ENCODE measurements at regions of chrX and their contacts with region 1.

Region 1: GRCh38 chrX:34058005-34058404 is 74.1 kb downstream of the FAM47A start:
- DNase-seq: no peak
- ATAC-seq: no peak
- H3K4me3 ChIP-seq: no peak overlapping the region
- H3K27ac ChIP-seq: no peak overlapping the region
- H3K4me1 ChIP-seq: no peaks in the 10 kb centered on the region
- H3K27me3 ChIP-seq: no peaks in the 10 kb centered on the region
- CTCF ChIP-seq: no peak
- POLR2A ChIP-seq: no peak
- RAD21 ChIP-seq: no peak

Region 2: GRCh38 chrX:34072906-34073305 is 14.9 kb after region 1 on chrX:
- CTCF ChIA-PET with region 1: no interaction called
- POLR2A ChIA-PET with region 1: interaction called, 12 read pairs
- dilution Hi-C with region 1: no loop called
- in situ Hi-C with region 1: no loop called
- intact Hi-C with region 1: no loop called
- DNase-seq: no peak
- ATAC-seq: no peak
- H3K4me3 ChIP-seq: no peak overlapping the region
- H3K27ac ChIP-seq: no peak overlapping the region
- H3K4me1 ChIP-seq: no peaks in the 10 kb centered on the region
- H3K27me3 ChIP-seq: no peaks in the 10 kb centered on the region
- CTCF ChIP-seq: no peak
- POLR2A ChIP-seq: no peak
- RAD21 ChIP-seq: no peak

Region 3: GRCh38 chrX:34126011-34126410 is 68.0 kb after region 1 on chrX:
- CTCF ChIA-PET with region 1: no interaction called
- POLR2A ChIA-PET with region 1: no interaction called
- dilution Hi-C with region 1: no loop called
- in situ Hi-C with region 1: no loop called
- intact Hi-C with region 1: no loop called
- DNase-seq: no peak
- ATAC-seq: no peak
- H3K4me3 ChIP-seq: no peak overlapping the region
- H3K27ac ChIP-seq: no peak overlapping the region
- H3K4me1 ChIP-seq: no peaks in the 10 kb centered on the region
- H3K27me3 ChIP-seq: no peaks in the 10 kb centered on the region
- CTCF ChIP-seq: no peak
- POLR2A ChIP-seq: no peak
- RAD21 ChIP-seq: no peak

Region 4: DNA sequence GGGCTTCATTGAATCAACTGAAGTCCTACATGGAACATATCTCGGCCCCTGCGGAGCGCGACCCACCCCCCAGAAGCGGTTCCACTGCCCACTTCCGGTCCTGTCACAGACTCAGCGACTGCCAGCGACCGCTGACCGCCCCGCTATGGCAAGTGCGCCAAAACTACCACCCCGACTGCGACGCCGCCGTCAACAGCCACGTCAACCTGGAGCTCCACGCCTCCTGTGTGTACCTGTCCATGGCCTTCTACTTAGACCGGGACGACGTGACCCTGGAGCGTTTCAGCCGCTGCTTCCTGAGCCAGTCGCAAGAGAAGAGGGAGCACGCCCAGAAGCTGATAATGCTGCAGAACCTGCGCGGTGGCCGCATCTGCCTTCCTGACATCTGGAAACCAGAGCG is 88.9 kb after region 1 on chrX:
- CTCF ChIA-PET with region 1: no interaction called
- POLR2A ChIA-PET with region 1: no interaction called
- dilution Hi-C with region 1: no loop called
- in situ Hi-C with region 1: no loop called
- intact Hi-C with region 1: no loop called
- DNase-seq: no peak
- ATAC-seq: no peak
- H3K4me3 ChIP-seq: no peak overlapping the region
- H3K27ac ChIP-seq: no peak overlapping the region
- H3K4me1 ChIP-seq: no peaks in the 10 kb centered on the region
- H3K27me3 ChIP-seq: no peaks in the 10 kb centered on the region
- CTCF ChIP-seq: no peak
- POLR2A ChIP-seq: no peak
- RAD21 ChIP-seq: no peak

Measured in IMR-90 (cell line).